BJ (cell line): ENCODE measurements at regions of chr22 and their contacts with region 1.

Region 1: DNA sequence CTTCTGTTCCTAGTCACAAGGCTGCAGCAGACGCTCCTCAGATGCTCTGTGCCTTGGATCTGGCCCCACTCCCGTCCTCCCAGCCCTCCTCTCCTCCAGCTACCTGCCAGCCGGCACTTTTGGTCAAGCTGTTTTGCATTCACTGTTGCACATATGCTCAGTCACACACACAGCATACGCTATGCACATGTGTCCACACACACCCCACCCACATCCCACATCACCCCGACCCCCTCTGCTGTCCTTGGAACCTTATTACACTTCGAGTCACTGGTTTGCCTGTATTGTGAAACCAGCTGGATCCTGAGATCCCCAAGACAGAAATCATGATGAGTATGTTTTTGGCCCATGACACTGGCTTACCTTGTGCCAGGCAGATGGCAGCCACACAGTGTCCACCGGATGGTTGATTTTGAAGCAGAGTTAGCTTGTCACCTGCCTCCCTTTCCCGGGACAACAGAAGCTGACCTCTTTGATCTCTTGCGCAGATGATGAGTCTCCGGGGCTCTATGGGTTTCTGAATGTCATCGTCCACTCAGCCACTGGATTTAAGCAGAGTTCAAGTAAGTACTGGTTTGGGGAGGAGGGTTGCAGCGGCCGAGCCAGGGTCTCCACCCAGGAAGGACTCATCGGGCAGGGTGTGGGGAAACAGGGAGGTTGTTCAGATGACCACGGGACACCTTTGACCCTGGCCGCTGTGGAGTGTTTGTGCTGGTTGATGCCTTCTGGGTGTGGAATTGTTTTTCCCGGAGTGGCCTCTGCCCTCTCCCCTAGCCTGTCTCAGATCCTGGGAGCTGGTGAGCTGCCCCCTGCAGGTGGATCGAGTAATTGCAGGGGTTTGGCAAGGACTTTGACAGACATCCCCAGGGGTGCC is 109.8 kb downstream of the BCR start:
- DNase-seq: no peak
- H3K4me3 ChIP-seq: no peak overlapping the region
- H3K27me3 ChIP-seq: no peaks in the 10 kb centered on the region
- CTCF ChIP-seq: peak; percentile 92

Region 2: GRCh38 chr22:23270212-23270733 is 19.8 kb before region 1 on chr22:
- CTCF ChIA-PET with region 1: interaction called, 12 read pairs
- POLR2A ChIA-PET with region 1: no interaction called
- DNase-seq: no peak
- H3K4me3 ChIP-seq: no peak overlapping the region
- H3K27me3 ChIP-seq: no peaks in the 10 kb centered on the region
- CTCF ChIP-seq: peak; percentile 22

Region 3: GRCh38 chr22:23302171-23303021 is 12.3 kb after region 1 on chr22:
- CTCF ChIA-PET with region 1: interaction called, 33 read pairs
- POLR2A ChIA-PET with region 1: no interaction called
- DNase-seq: no peak
- H3K4me3 ChIP-seq: no peak overlapping the region
- H3K27me3 ChIP-seq: no peaks in the 10 kb centered on the region
- CTCF ChIP-seq: no peak